ENCODE measurements at regions of chr1 and their contacts with region 1.

Region 1: GRCh38 chr1:183915625-183916510 is 110.9 kb downstream of the RGL1 start:
- DNase-seq: peak; percentile 85
- ATAC-seq: peak; percentile 89

Region 2: GRCh38 chr1:183652547-183653461 is 263.1 kb before region 1 on chr1 and contains the start of gene APOBEC4:
- intact Hi-C with region 1: loop called (anchors 5 kb)
- DNase-seq: no peak
- ATAC-seq: no peak
- total RNA-seq, gene APOBEC4: not detected

Measured in sciatic nerve (tissue), 2 donors.